ENCODE measurements at regions of chr4 and their contacts with region 1.

Region 1: DNA sequence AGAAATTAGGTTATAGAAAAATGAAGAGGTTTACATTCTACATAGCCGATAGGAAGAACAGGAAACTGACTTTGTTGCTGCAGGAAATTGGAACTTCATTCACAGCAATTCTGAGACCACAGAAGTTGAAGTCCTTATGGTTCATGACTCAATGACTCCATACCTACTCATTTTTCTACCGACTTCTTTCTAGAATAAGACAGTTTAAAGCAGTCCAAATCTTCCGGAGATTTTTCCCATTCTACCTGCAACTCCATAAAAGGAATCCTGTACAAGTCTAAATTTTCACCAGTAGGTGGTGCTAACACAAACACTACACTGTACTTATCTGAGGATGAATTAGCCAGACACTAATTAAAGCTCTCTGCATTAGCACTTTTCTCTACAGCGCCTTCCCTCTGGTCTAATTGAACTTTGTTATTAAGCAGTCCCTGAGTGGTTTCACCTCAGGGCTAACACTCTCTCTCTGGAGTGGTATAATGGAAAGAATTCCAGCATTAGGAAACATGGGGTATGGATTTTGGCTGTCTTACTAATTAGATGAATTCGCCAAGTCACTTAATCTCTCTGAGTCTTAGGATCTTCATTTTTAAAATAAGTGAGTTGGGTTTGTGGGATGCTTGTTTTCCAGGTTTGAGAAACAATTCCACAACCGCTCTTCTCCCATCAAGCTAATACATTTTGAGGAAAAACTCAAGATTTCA is 167.9 kb downstream of the SMIM20 start:
- DNase-seq: peak in 4 of 42 donors; percentile 18 to 62 (median 30)

Region 2: DNA sequence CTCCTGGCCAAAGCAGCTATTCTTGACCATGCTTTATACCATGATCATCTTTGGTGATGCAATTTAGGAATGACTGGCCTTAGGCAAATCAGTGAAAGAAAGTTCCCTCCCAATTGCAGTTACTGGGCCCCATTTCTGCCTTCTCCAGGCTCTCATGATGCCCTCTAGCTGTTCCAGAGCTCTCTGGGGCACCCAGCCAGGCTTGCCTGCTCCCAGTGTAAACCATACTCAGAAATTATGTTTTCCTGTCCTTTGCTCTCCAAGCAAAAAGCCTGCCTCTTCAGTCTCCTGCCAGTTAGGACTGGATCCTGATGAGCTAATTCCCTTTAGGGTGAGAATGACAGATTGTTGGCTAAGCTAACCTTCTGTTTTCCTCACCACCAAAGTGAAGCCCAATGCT is 153.6 kb after region 1 on chr4:
- intact Hi-C with region 1: loop called (anchors 5 kb)
- DNase-seq: peak in 38 of 42 donors; percentile 15 to 80 (median 50)

Region 3: DNA sequence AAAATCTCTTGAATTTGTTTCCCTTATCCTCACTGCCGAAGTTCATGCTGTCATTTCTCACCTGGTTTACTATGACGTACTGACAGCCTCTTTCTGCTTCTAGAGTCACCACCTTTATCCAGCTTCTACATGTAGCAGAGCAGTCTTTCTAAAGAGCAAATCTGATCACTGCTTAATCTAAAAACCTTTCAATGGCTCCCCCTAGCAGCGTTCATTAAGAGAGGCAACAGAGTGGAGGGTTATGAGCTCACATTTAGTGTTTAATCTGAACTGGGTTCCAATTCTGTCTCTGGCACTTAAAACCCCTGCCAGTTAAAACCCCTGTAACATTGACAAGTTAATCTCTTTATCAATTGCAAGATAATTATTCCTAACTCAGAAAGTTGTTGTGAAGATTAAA is 243.2 kb after region 1 on chr4:
- intact Hi-C with region 1: loop called (anchors 5 kb)
- DNase-seq: peak in 5 of 42 donors; percentile 30 to 59 (median 38)

Region 4: DNA sequence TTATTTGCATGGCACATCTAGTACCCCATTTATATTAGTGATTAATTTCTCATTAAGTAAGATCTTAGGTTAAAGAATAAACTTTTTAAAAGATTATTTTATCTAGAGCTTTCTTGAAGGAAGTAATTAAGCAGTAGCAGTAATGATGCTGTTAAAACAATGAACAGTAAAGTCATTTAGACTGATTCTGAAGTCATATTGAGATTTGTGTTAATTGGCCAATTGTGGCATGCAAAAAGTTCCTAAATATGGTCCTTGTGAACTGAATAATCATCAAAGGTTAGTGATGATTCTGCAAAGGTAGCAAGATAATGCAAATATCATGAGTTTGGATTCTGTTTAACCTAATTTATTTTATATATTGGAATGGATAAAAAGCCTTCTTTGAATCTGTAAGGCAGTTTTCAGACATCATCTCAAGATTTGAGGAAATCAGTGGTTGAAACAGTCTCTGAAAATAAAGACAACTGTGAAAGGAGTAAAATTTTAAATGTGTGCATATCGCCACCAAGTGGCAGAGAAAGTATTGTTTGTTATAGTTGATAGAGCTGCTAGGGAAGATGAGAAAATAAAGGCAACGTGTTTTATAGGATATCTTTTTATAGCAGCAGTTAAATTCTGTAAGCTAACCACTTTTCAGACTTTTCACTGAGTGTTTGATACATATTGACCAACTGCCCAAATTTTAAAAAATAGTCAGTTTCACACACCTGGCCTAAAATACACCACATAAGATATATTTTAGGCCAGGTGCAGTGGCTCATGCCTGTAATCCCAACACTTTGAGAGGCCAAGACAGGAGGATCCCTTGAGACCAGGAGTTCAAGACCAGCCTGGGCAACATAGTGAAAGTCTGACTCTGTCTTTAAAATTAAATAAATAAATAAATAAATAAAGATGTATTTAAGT is 328.7 kb after region 1 on chr4:
- intact Hi-C with region 1: loop called (anchors 5 kb)
- DNase-seq: peak in 18 of 42 donors; percentile 14 to 85 (median 56)